AG04450 (cell line): ENCODE measurements at regions of chr18 and their contacts with region 1.

Region 1: DNA sequence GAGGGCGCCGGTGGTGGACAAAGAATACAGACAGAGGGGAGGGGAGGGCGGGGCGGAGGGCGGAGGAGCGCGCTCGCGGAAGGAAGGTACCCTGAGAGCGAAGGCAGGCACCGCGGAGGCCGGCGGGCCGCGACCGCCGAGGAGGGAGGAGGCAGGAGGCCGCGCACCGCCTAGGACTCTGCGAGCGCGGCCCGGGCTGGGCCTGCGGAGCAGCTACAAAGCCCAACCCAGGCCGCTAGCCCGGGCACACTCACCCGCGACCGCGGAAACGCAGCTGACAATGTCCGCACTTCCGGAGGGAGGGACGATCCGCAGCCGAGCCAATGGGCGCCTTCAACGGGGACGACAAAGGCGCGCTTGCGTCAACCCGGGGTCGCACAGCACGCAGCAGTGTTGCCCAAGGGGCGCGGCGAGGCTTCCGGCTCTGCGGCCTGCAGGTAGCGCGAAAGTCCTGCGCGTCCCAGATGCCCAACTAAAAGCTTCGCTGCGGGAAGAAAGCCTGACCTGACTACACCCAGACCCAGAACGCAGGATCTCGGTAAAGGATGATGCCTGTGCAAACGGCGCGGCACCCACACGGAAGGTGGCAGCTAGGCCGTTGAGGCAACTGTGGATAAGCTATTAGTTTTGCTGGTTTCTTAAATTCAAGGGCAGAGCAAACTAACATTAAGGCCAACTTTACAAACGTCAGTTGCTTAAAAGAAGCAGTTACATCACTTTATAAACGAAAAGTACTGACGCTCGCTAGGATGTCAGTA is at the start of gene C18orf32:
- DNase-seq: peak; percentile 80
- H3K4me3 ChIP-seq: peak within 1 kb of the TSS; percentile 89
- H3K27ac ChIP-seq: peak within 1 kb of the TSS; percentile 86
- H3K27me3 ChIP-seq: no peaks in the 10 kb centered on the region
- CTCF ChIP-seq: no peak
- polyA plus RNA-seq, gene C18orf32: 31.9 and 47.6 TPM in 2 replicates

Region 2: DNA sequence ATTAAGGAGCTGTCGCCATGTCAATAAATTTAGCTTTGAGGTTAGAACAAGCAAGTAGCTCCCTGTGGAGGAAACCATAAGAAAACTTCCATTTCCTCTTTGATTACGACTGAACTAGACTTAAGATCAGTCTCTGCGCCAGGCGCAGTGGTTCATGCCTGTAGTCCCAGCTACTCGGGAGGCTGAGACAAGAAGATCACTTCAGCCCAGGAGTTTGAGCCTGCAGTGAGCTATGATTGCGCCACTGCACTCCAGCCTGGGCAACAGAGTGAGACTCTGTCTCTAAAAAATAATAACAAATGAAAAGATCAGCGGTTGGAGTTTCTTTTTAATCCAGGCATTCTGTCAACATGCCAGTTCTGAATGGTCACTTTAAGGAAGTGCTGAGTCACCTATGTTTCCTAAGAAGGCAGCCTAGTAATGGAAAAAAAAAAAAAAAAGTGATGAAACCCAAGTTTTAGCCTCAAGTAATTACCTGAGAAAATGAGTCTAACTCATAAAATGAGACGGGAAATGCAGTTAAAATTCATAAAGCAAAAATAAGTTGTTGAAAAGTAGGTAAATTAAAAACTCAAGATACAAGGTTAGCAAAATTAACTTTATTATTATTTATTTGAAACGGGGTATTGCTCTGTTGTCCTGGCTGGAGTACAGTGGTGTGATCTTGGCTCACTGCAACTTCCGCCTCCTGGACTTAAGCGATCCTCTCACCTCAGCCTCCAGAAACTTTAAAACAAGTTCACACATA is 10.3 kb before region 1 on chr18:
- CTCF ChIA-PET with region 1: no interaction called
- POLR2A ChIA-PET with region 1: interaction called, 14 read pairs
- DNase-seq: peak; percentile 34
- H3K4me3 ChIP-seq: no peak overlapping the region
- H3K27ac ChIP-seq: peak overlapping the region; percentile 55
- H3K27me3 ChIP-seq: no peaks in the 10 kb centered on the region
- CTCF ChIP-seq: no peak

Region 3: GRCh38 chr18:49520661-49521145 is 33.6 kb after region 1 on chr18:
- CTCF ChIA-PET with region 1: no interaction called
- POLR2A ChIA-PET with region 1: no interaction called
- DNase-seq: no peak
- H3K4me3 ChIP-seq: no peak overlapping the region
- H3K27ac ChIP-seq: no peak overlapping the region
- H3K27me3 ChIP-seq: no peaks in the 10 kb centered on the region
- CTCF ChIP-seq: no peak